Natural killer cell (primary cell): ENCODE measurements at regions of chr4 and their contacts with region 1.

Region 1: DNA sequence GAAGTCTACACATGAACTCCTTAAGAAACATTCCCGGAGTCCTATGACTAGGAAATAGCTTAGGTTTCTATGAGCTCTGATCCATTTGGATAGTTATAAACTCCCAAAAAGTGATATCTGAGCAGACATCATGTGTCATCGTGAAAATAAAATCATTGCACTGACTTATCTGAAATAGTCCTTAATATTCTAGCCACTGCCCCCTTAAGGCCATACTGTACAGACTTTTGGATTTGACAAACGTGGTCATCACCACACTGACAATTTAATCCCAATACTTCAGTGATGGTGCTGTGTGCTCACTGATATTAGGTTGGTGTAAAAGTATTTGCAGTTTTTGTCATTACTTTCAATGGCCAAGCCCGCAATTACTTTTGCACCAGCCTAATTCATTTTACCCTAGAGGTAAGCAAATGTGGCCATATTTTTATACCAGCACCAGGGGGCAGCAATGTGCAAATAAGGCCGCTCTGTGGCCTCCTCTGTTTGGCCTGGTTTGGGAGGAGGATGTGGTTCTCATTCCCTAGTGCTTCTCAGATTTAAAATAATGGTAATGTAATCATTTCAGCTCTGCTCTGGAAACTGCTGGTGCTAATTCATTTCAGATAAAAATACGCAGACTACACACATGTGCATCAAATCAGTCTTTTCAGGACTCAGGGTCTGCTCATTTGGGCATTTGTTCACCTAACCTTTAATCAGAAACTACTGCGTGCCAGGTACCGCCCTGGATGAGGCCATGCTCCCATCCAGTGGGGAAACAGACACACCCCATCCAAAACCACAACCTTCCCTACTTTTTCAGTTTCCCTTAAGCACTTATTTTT is 196.4 kb upstream of the C1QTNF7 start:
- DNase-seq: peak; percentile 56 to 87
- ATAC-seq: peak; percentile 80 to 88 (median 84)
- H3K4me3 ChIP-seq: no peak overlapping the region
- H3K4me3 Mint-ChIP-seq: no peak overlapping the region
- H3K27ac ChIP-seq: no peak overlapping the region
- H3K27ac Mint-ChIP-seq: no peak overlapping the region
- H3K4me1 ChIP-seq: peaks cover 15% of the 10 kb centered on the region
- H3K4me1 Mint-ChIP-seq: peaks cover 32 to 33% of the 10 kb centered on the region in 2 donors
- H3K27me3 ChIP-seq: no peaks in the 10 kb centered on the region
- H3K27me3 Mint-ChIP-seq: no peaks in the 10 kb centered on the region
- CTCF ChIP-seq: peak; percentile 88

Region 2: GRCh38 chr4:15396157-15396800 is 164.8 kb after region 1 on chr4:
- intact Hi-C with region 1: loop called (anchors 1 kb)
- DNase-seq: peak; percentile 23 to 73
- ATAC-seq: peak; percentile 73 to 90 (median 89)
- H3K4me3 ChIP-seq: no peak overlapping the region
- H3K4me3 Mint-ChIP-seq: no peak overlapping the region
- H3K27ac ChIP-seq: no peak overlapping the region
- H3K27ac Mint-ChIP-seq: peak overlapping the region in 1 of 2 donors; percentile 17
- H3K4me1 ChIP-seq: peaks cover 10% of the 10 kb centered on the region
- H3K4me1 Mint-ChIP-seq: peaks cover 24 to 32% of the 10 kb centered on the region in 2 donors
- H3K27me3 ChIP-seq: no peaks in the 10 kb centered on the region
- H3K27me3 Mint-ChIP-seq: peaks cover 0 to 3% of the 10 kb centered on the region in 2 donors
- CTCF ChIP-seq: peak; percentile 86

Region 3: GRCh38 chr4:15457406-15458201 is 226.1 kb after region 1 on chr4:
- intact Hi-C with region 1: loop called (anchors 1 kb)
- DNase-seq: peak in 1 of 2 donors; percentile 66
- ATAC-seq: peak; percentile 64 to 81 (median 69)
- H3K4me3 ChIP-seq: no peak overlapping the region
- H3K4me3 Mint-ChIP-seq: no peak overlapping the region
- H3K27ac ChIP-seq: no peak overlapping the region
- H3K27ac Mint-ChIP-seq: no peak overlapping the region
- H3K4me1 ChIP-seq: no peaks in the 10 kb centered on the region
- H3K4me1 Mint-ChIP-seq: peaks cover 0 to 4% of the 10 kb centered on the region in 2 donors
- H3K27me3 ChIP-seq: no peaks in the 10 kb centered on the region
- H3K27me3 Mint-ChIP-seq: peaks cover 5 to 12% of the 10 kb centered on the region in 2 donors
- CTCF ChIP-seq: peak; percentile 79

Region 4: DNA sequence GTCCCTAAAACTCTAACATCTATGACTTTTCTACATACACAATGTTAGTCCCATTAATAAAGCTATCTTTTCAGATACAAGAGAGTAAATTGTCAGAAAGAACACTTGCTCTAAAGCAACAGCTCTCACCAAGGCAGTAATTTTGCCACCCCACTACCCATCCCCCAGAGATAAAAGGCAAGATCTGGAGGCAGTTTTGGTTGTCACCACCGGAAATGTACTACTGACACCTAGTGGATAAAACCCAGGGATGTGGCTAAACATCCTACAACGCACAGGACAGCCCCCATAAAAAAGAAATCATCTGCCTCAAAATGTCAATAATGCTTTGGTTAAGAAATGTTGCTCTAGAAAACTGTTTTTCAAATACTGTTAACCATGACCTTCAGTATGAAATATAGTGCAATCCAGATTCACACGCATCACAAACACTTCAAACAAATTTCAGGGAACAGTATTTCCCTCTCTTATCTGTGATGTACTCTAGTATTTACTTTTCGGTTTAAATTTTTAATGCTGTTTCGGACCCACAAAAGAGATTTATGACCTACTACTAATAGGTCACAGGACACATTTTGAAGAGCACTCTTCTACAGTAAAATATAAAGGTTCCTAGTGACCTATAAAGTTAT is 418.6 kb after region 1 on chr4:
- intact Hi-C with region 1: loop called (anchors 2 kb)
- DNase-seq: peak; percentile 48 to 88
- ATAC-seq: peak; percentile 79 to 90 (median 80)
- H3K4me3 ChIP-seq: no peak overlapping the region
- H3K4me3 Mint-ChIP-seq: peak overlapping the region; percentile 70
- H3K27ac ChIP-seq: peak overlapping the region; percentile 38
- H3K27ac Mint-ChIP-seq: peak overlapping the region; percentile 94 to 96
- H3K4me1 ChIP-seq: peaks cover 23% of the 10 kb centered on the region
- H3K4me1 Mint-ChIP-seq: peaks cover 56 to 68% of the 10 kb centered on the region in 2 donors
- H3K27me3 ChIP-seq: no peaks in the 10 kb centered on the region
- H3K27me3 Mint-ChIP-seq: no peaks in the 10 kb centered on the region
- CTCF ChIP-seq: peak; percentile 73

Region 5: DNA sequence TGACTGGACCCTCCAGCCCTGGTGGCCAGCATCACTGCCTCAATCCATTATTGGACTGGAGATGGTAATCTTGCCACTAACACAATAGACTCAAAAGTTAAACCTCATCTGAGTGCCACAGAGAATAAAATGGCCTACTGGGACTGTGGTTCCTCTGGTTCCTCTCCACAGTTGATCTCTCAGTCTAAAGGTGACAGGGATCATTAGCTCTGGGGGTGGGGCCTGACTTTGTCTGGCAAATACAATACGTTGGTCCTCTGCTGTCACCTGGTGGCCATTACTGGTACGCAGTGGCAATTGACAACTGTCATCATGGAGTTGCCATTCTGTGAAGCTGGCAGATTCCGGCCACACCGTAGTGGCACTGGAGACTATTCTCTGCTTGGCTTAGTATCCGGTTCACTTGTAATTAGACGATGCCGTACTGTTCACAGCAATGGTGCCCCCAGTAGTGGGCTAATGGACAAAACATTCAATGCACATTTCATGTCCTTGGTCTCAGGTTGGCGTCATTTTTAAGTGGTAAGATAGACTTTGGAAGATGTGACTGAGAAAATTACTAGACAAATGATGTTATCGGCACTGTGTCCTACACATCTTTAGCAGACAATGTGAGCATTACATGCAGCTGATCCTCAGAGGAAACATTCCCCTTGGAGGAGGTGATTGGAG is 724.8 kb after region 1 on chr4:
- intact Hi-C with region 1: loop called (anchors 1 kb)
- DNase-seq: peak; percentile 75 to 86
- ATAC-seq: peak; percentile 82 to 91 (median 89)
- H3K4me3 ChIP-seq: no peak overlapping the region
- H3K4me3 Mint-ChIP-seq: peak overlapping the region; percentile 70
- H3K27ac ChIP-seq: no peak overlapping the region
- H3K27ac Mint-ChIP-seq: peak overlapping the region; percentile 81 to 83
- H3K4me1 ChIP-seq: peaks cover 16% of the 10 kb centered on the region
- H3K4me1 Mint-ChIP-seq: peaks cover 44 to 55% of the 10 kb centered on the region in 2 donors
- H3K27me3 ChIP-seq: no peaks in the 10 kb centered on the region
- H3K27me3 Mint-ChIP-seq: no peaks in the 10 kb centered on the region
- CTCF ChIP-seq: peak; percentile 86